ENCODE measurements at regions of chr2 and their contacts with region 1.

Region 1: GRCh38 chr2:111219285-111219684 is 98.6 kb downstream of the BCL2L11 start:
- DNase-seq: peak; percentile 41
- ATAC-seq: peak; percentile 70
- H3K4me3 Mint-ChIP-seq: peak overlapping the region; percentile 52
- H3K27ac Mint-ChIP-seq: peak overlapping the region; percentile 95
- H3K4me1 Mint-ChIP-seq: peaks cover 50% of the 10 kb centered on the region
- H3K27me3 Mint-ChIP-seq: no peaks in the 10 kb centered on the region
- CTCF ChIP-seq: no peak

Region 2: GRCh38 chr2:110677530-110678456 is 541.5 kb before region 1 on chr2 and contains the start of gene BUB1:
- CTCF ChIA-PET with region 1: no interaction called
- POLR2A ChIA-PET with region 1: no interaction called
- intact Hi-C with region 1: loop called (anchors 5 kb)
- DNase-seq: peak; percentile 89
- ATAC-seq: peak; percentile 92
- H3K4me3 Mint-ChIP-seq: peak within 1 kb of the TSS; percentile 96
- H3K27ac Mint-ChIP-seq: peak within 1 kb of the TSS; percentile 97
- H3K4me1 Mint-ChIP-seq: peaks cover 34% of the 10 kb centered on the region
- H3K27me3 Mint-ChIP-seq: no peaks in the 10 kb centered on the region
- CTCF ChIP-seq: no peak
- total RNA-seq, gene BUB1: 5.9 and 6.2 TPM in 2 replicates

Region 3: GRCh38 chr2:110812726-110813645 is 406.3 kb before region 1 on chr2:
- CTCF ChIA-PET with region 1: no interaction called
- POLR2A ChIA-PET with region 1: no interaction called
- intact Hi-C with region 1: loop called (anchors 5 kb)
- DNase-seq: no peak
- ATAC-seq: no peak
- H3K4me3 Mint-ChIP-seq: no peak overlapping the region
- H3K27ac Mint-ChIP-seq: no peak overlapping the region
- H3K4me1 Mint-ChIP-seq: peaks cover 3% of the 10 kb centered on the region
- H3K27me3 Mint-ChIP-seq: peaks cover 8% of the 10 kb centered on the region
- CTCF ChIP-seq: no peak

Region 4: GRCh38 chr2:110960954-110961353 is 258.3 kb before region 1 on chr2:
- CTCF ChIA-PET with region 1: no interaction called
- POLR2A ChIA-PET with region 1: no interaction called
- intact Hi-C with region 1: no loop called
- DNase-seq: no peak
- ATAC-seq: no peak
- H3K4me3 Mint-ChIP-seq: no peak overlapping the region
- H3K27ac Mint-ChIP-seq: no peak overlapping the region
- H3K4me1 Mint-ChIP-seq: no peaks in the 10 kb centered on the region
- H3K27me3 Mint-ChIP-seq: peaks cover 30% of the 10 kb centered on the region
- CTCF ChIP-seq: no peak

Region 5: DNA sequence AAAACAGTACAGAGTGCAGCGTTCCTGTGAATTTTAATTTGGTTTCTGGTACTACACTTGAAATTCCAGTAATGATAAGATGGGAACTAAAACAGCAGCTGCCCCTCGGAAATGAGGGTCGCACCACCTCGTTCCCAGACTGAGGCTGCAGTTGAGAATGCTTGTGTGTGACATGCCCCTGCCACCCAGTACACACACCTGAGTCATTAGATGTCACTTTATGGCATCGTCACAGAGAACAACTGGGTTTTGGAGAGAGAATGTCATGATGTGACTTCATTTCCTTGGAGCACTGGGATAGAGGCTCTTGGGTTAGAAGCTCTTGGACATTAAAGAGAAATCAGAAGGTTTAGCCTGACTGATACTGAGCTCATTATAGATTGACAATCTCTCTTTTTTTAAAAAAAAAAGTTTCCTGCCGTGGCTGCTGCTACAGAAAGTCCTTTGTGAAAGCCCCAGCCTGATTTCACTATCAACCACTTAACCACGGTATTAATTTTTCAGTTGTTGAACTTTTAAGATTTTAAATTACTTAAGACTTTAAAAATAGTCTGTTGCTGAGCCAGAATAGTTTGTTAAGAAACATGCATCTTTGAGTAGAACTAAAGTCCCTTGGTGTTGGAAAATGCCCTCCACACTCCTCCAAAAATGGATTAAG is 74.1 kb before region 1 on chr2:
- CTCF ChIA-PET with region 1: no interaction called
- POLR2A ChIA-PET with region 1: no interaction called
- intact Hi-C with region 1: no loop called
- DNase-seq: no peak
- ATAC-seq: no peak
- H3K4me3 Mint-ChIP-seq: no peak overlapping the region
- H3K27ac Mint-ChIP-seq: no peak overlapping the region
- H3K4me1 Mint-ChIP-seq: peaks cover 12% of the 10 kb centered on the region
- H3K27me3 Mint-ChIP-seq: no peaks in the 10 kb centered on the region
- CTCF ChIP-seq: no peak

Region 6: DNA sequence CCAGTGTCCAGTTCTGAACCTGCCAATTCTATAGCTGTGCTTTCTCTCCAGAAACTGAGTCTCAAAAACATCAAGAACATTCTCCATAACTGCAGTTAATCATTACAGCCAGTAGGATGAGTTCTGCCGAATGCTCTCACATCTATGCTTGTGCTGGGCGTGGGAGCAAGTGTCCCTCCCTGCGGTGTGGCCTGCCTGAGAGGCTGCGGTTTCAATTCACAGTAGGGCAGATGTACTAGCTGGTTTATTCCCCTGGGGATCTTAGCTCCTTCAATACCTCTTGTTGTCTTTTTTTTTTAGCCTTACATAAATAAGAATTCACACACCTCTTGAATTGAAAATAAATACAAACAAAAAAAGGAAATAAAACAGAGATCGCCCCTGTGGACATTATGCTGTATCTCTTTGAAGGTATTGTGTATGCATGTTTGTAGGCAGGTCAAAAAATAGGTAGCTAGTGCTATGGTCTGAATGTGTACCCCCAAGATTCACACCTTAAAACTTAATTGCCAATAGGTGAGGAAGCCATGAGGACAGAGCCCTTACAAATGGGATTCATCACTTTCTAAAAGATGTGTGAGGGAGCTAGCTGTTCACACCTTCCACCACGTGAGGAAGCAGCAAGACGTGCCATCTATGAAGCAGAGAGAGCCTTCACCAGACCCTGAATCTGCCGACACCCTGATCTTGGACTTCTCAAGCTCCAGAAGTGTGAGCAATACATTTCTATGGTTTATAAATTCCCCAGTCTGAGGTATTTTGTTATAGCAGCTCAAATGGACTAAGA is 24.3 kb before region 1 on chr2:
- CTCF ChIA-PET with region 1: interaction called, 3 read pairs
- POLR2A ChIA-PET with region 1: interaction called, 9 read pairs
- intact Hi-C with region 1: loop called (anchors 2 kb)
- DNase-seq: no peak
- ATAC-seq: peak; percentile 78
- H3K4me3 Mint-ChIP-seq: peak overlapping the region; percentile 6
- H3K27ac Mint-ChIP-seq: peak overlapping the region; percentile 37
- H3K4me1 Mint-ChIP-seq: peaks cover 43% of the 10 kb centered on the region
- H3K27me3 Mint-ChIP-seq: no peaks in the 10 kb centered on the region
- CTCF ChIP-seq: no peak

Region 7: DNA sequence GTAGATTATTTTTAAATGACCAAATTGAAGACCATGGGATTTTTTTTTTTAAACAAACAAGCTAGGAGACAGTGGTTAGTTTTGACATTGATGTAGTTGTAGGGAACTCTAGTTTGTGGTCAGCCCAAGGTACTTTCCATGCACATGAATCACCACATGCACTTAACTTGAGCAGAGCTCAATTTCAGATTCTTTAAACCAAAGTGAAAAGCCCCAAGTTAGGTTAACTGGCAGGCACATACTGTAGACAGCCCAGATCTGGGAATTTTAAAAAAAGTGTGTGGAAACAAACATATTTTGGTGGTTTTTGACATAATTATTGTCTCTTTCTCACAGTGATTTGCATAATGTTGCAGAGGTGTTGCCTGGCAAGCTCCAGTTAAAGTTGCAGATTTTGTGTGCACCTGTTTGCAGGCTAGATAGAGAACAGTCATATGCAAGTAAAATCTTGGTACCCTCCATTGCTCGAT is 10.2 kb before region 1 on chr2:
- CTCF ChIA-PET with region 1: interaction called, 16 read pairs
- POLR2A ChIA-PET with region 1: interaction called, 53 read pairs
- intact Hi-C with region 1: loop called (anchors 1 kb)
- DNase-seq: no peak
- ATAC-seq: peak; percentile 91
- H3K4me3 Mint-ChIP-seq: peak overlapping the region; percentile 35
- H3K27ac Mint-ChIP-seq: peak overlapping the region; percentile 80
- H3K4me1 Mint-ChIP-seq: peaks cover 37% of the 10 kb centered on the region
- H3K27me3 Mint-ChIP-seq: no peaks in the 10 kb centered on the region
- CTCF ChIP-seq: no peak

Region 8: GRCh38 chr2:111246620-111247061 is 27.4 kb after region 1 on chr2:
- CTCF ChIA-PET with region 1: no interaction called
- POLR2A ChIA-PET with region 1: no interaction called
- intact Hi-C with region 1: no loop called
- DNase-seq: no peak
- ATAC-seq: no peak
- H3K4me3 Mint-ChIP-seq: no peak overlapping the region
- H3K27ac Mint-ChIP-seq: no peak overlapping the region
- H3K4me1 Mint-ChIP-seq: no peaks in the 10 kb centered on the region
- H3K27me3 Mint-ChIP-seq: no peaks in the 10 kb centered on the region
- CTCF ChIP-seq: no peak

Region 9: GRCh38 chr2:111705711-111706336 is 486.5 kb after region 1 on chr2:
- CTCF ChIA-PET with region 1: no interaction called
- POLR2A ChIA-PET with region 1: no interaction called
- intact Hi-C with region 1: loop called (anchors 5 kb)
- DNase-seq: no peak
- ATAC-seq: peak; percentile 81
- H3K4me3 Mint-ChIP-seq: peak overlapping the region; percentile 20
- H3K27ac Mint-ChIP-seq: peak overlapping the region; percentile 81
- H3K4me1 Mint-ChIP-seq: peaks cover 24% of the 10 kb centered on the region
- H3K27me3 Mint-ChIP-seq: peaks cover 2% of the 10 kb centered on the region
- CTCF ChIP-seq: no peak